ENCODE measurements at regions of chr3 and their contacts with region 1.

Region 1: GRCh38 chr3:9302425-9303181 is 53.2 kb upstream of the SRGAP3 start:
- DNase-seq: peak; percentile 84
- H3K4me3 Mint-ChIP-seq: no peak overlapping the region
- H3K27ac Mint-ChIP-seq: no peak overlapping the region
- H3K4me1 Mint-ChIP-seq: peaks cover 4% of the 10 kb centered on the region
- H3K27me3 Mint-ChIP-seq: peaks cover 18% of the 10 kb centered on the region

Region 2: DNA sequence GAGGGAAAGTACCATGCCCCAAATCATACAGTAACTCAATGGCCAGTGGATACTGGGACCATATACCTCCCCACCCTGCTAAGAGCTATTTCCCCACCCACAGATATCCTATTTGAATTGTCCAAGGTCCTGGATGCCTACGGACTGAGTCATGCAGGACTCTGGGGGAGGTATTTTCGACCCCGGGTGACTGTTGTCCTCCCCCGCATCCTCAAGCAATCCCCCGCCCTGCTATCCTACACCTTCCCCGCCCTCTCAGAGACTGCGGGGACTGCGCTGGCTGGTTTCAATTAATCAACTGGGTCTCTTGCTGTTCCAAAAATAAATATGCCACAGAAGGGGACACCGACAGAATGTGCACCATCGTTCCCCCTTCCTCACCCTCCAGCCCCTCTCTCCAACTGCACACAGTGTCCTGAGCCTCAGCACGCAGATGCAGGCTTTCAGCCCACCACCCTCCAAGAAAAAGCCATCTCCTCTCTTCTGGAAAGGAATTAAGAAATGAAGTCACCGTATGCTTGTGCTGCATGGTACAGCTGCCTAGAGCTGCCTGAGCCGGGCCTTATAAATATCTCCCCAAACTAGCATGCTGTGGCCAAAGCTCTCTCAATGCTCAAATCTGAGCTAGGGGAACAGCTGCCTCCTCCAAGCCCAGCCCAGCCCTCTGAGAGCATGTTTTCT is 560.9 kb before region 1 on chr3:
- CTCF ChIA-PET with region 1: no interaction called
- DNase-seq: peak; percentile 7
- H3K4me3 Mint-ChIP-seq: no peak overlapping the region
- H3K27ac Mint-ChIP-seq: no peak overlapping the region
- H3K4me1 Mint-ChIP-seq: no peaks in the 10 kb centered on the region
- H3K27me3 Mint-ChIP-seq: peaks cover 37% of the 10 kb centered on the region

Region 3: DNA sequence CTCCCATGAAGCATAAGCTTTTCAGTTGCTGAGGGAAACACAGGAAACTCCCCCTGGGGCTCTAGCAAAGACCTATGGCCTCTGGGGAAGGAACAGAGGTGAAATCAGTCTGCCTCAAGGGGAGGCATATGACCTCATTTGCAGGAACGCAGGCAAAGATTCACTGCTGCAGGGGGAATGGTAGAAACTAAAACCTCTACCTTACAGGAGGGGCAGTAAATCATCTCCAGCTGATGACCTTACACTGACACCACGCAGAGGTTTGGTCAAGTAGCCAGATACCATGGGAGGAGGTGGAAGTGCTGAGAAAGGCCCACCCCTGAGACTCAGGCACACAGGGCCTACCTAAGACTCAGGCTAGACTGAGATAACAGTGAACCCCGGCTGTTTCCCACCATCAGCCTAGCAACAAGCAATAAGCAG is 420.4 kb before region 1 on chr3:
- CTCF ChIA-PET with region 1: no interaction called
- DNase-seq: no peak
- H3K4me3 Mint-ChIP-seq: no peak overlapping the region
- H3K27ac Mint-ChIP-seq: no peak overlapping the region
- H3K4me1 Mint-ChIP-seq: no peaks in the 10 kb centered on the region
- H3K27me3 Mint-ChIP-seq: no peaks in the 10 kb centered on the region

Region 4: GRCh38 chr3:8970971-8971589 is 331.5 kb before region 1 on chr3:
- CTCF ChIA-PET with region 1: interaction called, 136 read pairs
- DNase-seq: peak; percentile 82
- H3K4me3 Mint-ChIP-seq: no peak overlapping the region
- H3K27ac Mint-ChIP-seq: no peak overlapping the region
- H3K4me1 Mint-ChIP-seq: peaks cover 4% of the 10 kb centered on the region
- H3K27me3 Mint-ChIP-seq: peaks cover 34% of the 10 kb centered on the region

Region 5: DNA sequence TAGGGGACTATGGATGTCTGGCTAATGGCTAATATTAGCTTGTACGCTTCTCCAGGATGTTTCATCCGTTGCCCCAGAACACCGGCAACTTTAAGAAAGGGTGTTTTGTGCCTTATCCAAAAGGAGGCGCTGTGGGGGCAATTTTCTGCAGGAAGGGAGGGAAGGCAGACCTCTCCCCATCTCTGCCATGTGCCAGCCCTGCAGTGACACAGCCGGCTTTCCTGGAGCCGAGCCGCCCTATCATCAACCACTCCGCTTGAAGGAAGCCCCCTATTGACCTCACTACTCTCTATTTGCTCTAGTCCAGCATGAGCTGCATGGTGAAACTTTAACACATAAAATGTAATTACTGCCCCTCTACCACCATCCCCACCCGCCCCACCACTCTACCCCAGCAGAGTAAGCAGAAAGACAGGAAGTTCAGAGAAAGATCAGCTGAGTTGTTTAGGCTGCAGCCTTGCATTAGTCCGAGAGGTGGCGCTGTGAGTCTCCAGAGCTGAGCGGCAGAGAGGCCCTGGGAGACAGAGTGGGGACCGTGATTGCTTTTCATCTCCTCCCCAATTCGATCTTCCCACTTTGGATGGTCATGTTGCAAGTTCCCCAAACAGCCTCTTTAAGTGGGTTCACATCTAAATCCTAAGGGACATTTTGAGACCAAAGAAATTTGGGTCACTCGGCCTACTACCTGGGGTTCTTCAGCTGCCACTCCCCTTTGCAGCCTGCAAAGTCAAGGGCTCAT is 314.8 kb before region 1 on chr3:
- CTCF ChIA-PET with region 1: interaction called, 130 read pairs
- DNase-seq: peak; percentile 82
- H3K4me3 Mint-ChIP-seq: peak overlapping the region; percentile 28
- H3K27ac Mint-ChIP-seq: no peak overlapping the region
- H3K4me1 Mint-ChIP-seq: peaks cover 6% of the 10 kb centered on the region
- H3K27me3 Mint-ChIP-seq: no peaks in the 10 kb centered on the region

Region 6: DNA sequence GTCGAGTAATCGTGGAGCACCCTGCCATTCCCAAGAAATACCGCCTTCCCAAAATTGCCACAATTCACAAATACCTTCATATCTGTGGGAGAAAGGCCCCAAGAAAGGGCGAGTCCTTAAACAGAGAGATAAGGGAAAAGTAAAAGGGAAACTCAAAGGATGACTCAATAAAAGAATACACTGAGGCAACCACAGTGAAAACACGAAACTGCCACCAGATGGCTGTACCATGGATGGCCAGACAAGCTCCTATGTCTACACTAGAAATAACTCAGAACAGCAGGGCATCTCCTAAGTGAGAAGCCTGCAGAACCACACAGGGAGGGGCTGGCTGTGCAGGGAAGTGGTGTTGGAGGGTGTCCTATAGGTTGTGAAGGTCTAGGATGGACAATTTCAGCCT is 78.1 kb before region 1 on chr3:
- CTCF ChIA-PET with region 1: interaction called, 11 read pairs
- DNase-seq: peak; percentile 31
- H3K4me3 Mint-ChIP-seq: no peak overlapping the region
- H3K27ac Mint-ChIP-seq: no peak overlapping the region
- H3K4me1 Mint-ChIP-seq: peaks cover 28% of the 10 kb centered on the region
- H3K27me3 Mint-ChIP-seq: no peaks in the 10 kb centered on the region

Region 7: GRCh38 chr3:9249273-9250192 is 53.1 kb before region 1 on chr3 and contains the start of gene SRGAP3:
- CTCF ChIA-PET with region 1: interaction called, 14 read pairs
- DNase-seq: peak; percentile 89
- H3K4me3 Mint-ChIP-seq: peak within 1 kb of the TSS; percentile 83
- H3K27ac Mint-ChIP-seq: peak within 1 kb of the TSS; percentile 58
- H3K4me1 Mint-ChIP-seq: peaks cover 30% of the 10 kb centered on the region
- H3K27me3 Mint-ChIP-seq: peaks cover 30% of the 10 kb centered on the region

Measured in activated naive CD4-positive, alpha-beta T cell treated with anti-CD3 and anti-CD28 coated beads, Interleukin-2, amount 10 ng/mL, durations not matched to agents 7 days and 5 days (primary cell).